ENCODE measurements at regions of chr2 and their contacts with region 1.

Region 1: GRCh38 chr2:96138179-96139145 is at the start of gene ASTL:
- DNase-seq: peak; percentile 79
- H3K4me3 Mint-ChIP-seq: no peak within 1 kb of the TSS
- H3K27ac Mint-ChIP-seq: no peak within 1 kb of the TSS
- H3K4me1 Mint-ChIP-seq: peaks cover 19% of the 10 kb centered on the region
- H3K27me3 Mint-ChIP-seq: peaks cover 5% of the 10 kb centered on the region

Region 2: DNA sequence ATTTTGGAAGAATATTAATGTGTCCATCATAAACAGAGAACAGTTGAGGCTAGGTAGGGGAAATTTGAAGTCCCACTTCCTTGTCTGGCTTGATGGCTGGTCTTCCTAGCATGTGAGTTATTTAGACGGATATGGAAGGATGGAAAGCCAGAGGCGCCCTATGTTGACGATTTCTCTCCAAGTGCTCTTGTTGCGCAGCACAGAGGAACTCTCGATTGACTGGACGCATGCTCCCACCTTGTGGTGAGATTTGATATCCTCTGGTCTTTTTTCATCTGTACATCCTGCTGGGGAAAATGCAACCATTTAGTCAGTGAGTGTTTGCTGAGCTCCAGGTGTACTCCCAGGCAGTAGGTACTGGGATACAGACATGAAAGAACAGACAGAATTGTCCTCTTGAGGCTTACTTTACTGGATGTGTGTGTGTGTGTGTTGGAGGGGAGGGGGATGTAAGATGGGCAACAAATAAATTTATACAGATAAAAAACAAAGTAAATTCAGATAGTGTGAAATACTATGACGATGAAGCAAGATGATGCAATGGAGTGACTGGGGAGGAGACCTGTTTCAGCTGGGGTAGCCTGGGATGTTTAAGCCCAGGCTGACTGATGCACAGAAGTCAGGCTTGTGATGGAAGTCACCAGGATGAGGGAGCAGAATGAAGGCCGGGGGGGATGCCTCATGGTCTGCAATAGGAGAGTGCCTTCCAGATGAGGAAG is 409.4 kb before region 1 on chr2:
- CTCF ChIA-PET with region 1: no interaction called
- DNase-seq: peak; percentile 64
- H3K4me3 Mint-ChIP-seq: no peak overlapping the region
- H3K27ac Mint-ChIP-seq: no peak overlapping the region
- H3K4me1 Mint-ChIP-seq: no peaks in the 10 kb centered on the region
- H3K27me3 Mint-ChIP-seq: peaks cover 20% of the 10 kb centered on the region

Region 3: DNA sequence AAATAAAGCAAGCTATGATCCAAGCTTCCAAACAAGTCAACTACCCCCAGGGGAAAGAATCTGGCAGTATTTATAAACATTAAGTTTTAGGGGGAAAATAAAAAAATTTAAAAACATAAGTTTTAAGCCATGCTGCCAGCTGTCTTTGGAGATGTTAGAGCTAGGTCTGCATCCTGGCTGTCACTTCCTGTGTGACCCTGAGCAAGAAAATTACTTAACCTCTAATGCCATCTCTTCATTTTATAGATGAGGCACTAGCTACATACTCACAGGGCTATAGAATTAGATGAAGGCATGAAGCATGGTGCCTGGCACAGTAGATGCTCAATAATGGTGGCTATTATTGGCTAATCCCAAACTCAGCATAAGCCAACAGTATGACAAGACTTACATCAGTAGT is 42.1 kb after region 1 on chr2:
- CTCF ChIA-PET with region 1: interaction called, 507 read pairs
- DNase-seq: no peak
- H3K4me3 Mint-ChIP-seq: no peak overlapping the region
- H3K27ac Mint-ChIP-seq: no peak overlapping the region
- H3K4me1 Mint-ChIP-seq: peaks cover 11% of the 10 kb centered on the region
- H3K27me3 Mint-ChIP-seq: peaks cover 13% of the 10 kb centered on the region

Region 4: GRCh38 chr2:96260404-96261260 is 122.2 kb after region 1 on chr2:
- CTCF ChIA-PET with region 1: interaction called, 18 read pairs
- DNase-seq: peak; percentile 64
- H3K4me3 Mint-ChIP-seq: no peak overlapping the region
- H3K27ac Mint-ChIP-seq: peak overlapping the region; percentile 83
- H3K4me1 Mint-ChIP-seq: peaks cover 83% of the 10 kb centered on the region
- H3K27me3 Mint-ChIP-seq: no peaks in the 10 kb centered on the region

Region 5: DNA sequence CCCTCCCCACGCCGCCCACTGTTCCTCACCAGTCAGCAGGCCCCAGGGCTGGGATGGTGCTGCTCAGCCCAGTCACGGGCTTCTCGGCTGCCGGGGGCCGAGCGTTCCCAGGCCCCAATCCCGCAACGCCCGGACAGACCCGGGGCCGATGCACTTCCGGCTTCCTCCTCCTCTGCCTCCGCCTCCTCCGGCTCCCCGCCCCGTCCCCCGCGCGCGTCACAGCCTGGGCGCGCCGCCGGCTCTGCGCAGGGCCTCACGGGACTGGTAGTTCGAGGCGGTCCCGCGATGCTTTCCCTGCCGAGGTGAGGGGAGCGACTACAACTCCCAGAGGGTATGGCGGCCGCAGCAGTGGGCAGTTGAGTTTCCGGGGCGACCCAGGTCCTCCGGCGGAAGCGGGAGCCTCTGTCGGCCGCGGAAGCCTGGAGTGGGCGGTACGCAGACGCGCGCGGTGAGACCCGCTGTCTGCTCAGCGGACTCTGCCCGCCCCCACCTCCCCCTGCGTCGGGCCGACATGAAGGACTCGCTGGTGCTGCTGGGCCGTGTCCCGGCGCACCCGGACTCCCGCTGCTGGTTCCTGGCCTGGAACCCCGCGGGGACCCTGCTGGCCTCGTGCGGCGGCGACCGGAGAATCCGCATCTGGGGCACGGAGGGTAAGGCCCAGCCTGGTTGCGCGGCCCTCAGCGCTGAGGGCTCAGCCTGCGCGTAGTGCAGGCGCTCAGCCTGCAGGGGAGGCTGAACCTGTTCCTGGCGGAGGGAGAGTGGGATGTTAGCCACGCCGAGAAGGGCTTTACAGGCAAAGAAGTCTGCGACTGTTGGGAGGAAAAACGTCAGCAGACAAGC is 127.6 kb after region 1 on chr2 and contains the starts of genes CIAO1 and TMEM127:
- CTCF ChIA-PET with region 1: interaction called, 18 read pairs
- DNase-seq: peak; percentile 99
- H3K4me3 Mint-ChIP-seq: peak within 1 kb of the TSS; percentile 91
- H3K27ac Mint-ChIP-seq: peak within 1 kb of the TSS; percentile 86
- H3K4me1 Mint-ChIP-seq: peaks cover 44% of the 10 kb centered on the region
- H3K27me3 Mint-ChIP-seq: no peaks in the 10 kb centered on the region

Region 6: GRCh38 chr2:96374211-96374951 is 235.9 kb after region 1 on chr2:
- CTCF ChIA-PET with region 1: no interaction called
- DNase-seq: no peak
- H3K4me3 Mint-ChIP-seq: no peak overlapping the region
- H3K27ac Mint-ChIP-seq: no peak overlapping the region
- H3K4me1 Mint-ChIP-seq: no peaks in the 10 kb centered on the region
- H3K27me3 Mint-ChIP-seq: peaks cover under 1% of the 10 kb centered on the region